CD8-positive, alpha-beta T cell (primary cell): ENCODE measurements at regions of chr2 and their contacts with region 1.

Region 1: GRCh38 chr2:152432206-152432653 is 97.3 kb downstream of the FMNL2 start:
- DNase-seq: peak in 1 of 9 experiments; percentile 16
- ATAC-seq: no peak
- H3K4me3 ChIP-seq: no peak overlapping the region
- H3K4me3 Mint-ChIP-seq: no peak overlapping the region
- H3K27ac ChIP-seq: no peak overlapping the region
- H3K27ac Mint-ChIP-seq: no peak overlapping the region
- H3K4me1 ChIP-seq: no peaks in the 10 kb centered on the region
- H3K4me1 Mint-ChIP-seq: no peaks in the 10 kb centered on the region
- H3K27me3 ChIP-seq: no peaks in the 10 kb centered on the region
- H3K27me3 Mint-ChIP-seq: peaks cover 1% of the 10 kb centered on the region
- CTCF ChIP-seq: no peak

Region 2: GRCh38 chr2:152359573-152360363 is 72.5 kb before region 1 on chr2:
- CTCF ChIA-PET with region 1: no interaction called
- POLR2A ChIA-PET with region 1: no interaction called
- intact Hi-C with region 1: loop called in 1 of 2 experiments (anchors 5 kb)
- DNase-seq: no peak
- ATAC-seq: no peak
- H3K4me3 ChIP-seq: no peak overlapping the region
- H3K4me3 Mint-ChIP-seq: no peak overlapping the region
- H3K27ac ChIP-seq: no peak overlapping the region
- H3K27ac Mint-ChIP-seq: no peak overlapping the region
- H3K4me1 ChIP-seq: no peaks in the 10 kb centered on the region
- H3K4me1 Mint-ChIP-seq: no peaks in the 10 kb centered on the region
- H3K27me3 ChIP-seq: no peaks in the 10 kb centered on the region
- H3K27me3 Mint-ChIP-seq: peaks cover 2% of the 10 kb centered on the region
- CTCF ChIP-seq: no peak

Region 3: GRCh38 chr2:152411154-152411553 is 21.1 kb before region 1 on chr2:
- CTCF ChIA-PET with region 1: interaction called, 3 read pairs
- POLR2A ChIA-PET with region 1: no interaction called
- intact Hi-C with region 1: loop called in 1 of 2 experiments (anchors 1 kb)
- DNase-seq: no peak
- ATAC-seq: no peak
- H3K4me3 ChIP-seq: no peak overlapping the region
- H3K4me3 Mint-ChIP-seq: no peak overlapping the region
- H3K27ac ChIP-seq: no peak overlapping the region
- H3K27ac Mint-ChIP-seq: no peak overlapping the region
- H3K4me1 ChIP-seq: no peaks in the 10 kb centered on the region
- H3K4me1 Mint-ChIP-seq: no peaks in the 10 kb centered on the region
- H3K27me3 ChIP-seq: no peaks in the 10 kb centered on the region
- H3K27me3 Mint-ChIP-seq: peaks cover 6% of the 10 kb centered on the region
- CTCF ChIP-seq: no peak